Common myeloid progenitor, CD34-positive (primary cell): ENCODE measurements at regions of chr13 and their contacts with region 1.

Region 1: GRCh38 chr13:113730831-113731191 is 28.2 kb upstream of the TMEM255B start:
- DNase-seq: no peak
- H3K4me3 ChIP-seq: no peak overlapping the region
- H3K27ac ChIP-seq: no peak overlapping the region
- H3K4me1 ChIP-seq: peaks cover 0 to 17% (median 7%) of the 10 kb centered on the region in 4 experiments
- H3K27me3 ChIP-seq: peaks cover 0 to 48% (median 8%) of the 10 kb centered on the region in 5 experiments

Region 2: GRCh38 chr13:113564331-113565043 is 166.3 kb before region 1 on chr13:
- CTCF ChIA-PET with region 1: no interaction called
- POLR2A ChIA-PET with region 1: no interaction called
- DNase-seq: no peak
- H3K4me3 ChIP-seq: no peak overlapping the region
- H3K27ac ChIP-seq: no peak overlapping the region
- H3K4me1 ChIP-seq: peaks cover 0 to 2% (median 0%) of the 10 kb centered on the region in 4 experiments
- H3K27me3 ChIP-seq: peaks cover 0 to 12% (median 2%) of the 10 kb centered on the region in 5 experiments

Region 3: GRCh38 chr13:113742000-113742441 is 11.2 kb after region 1 on chr13:
- CTCF ChIA-PET with region 1: interaction called, 21 read pairs
- POLR2A ChIA-PET with region 1: no interaction called
- DNase-seq: peak; percentile 46 to 62 (median 57)
- H3K4me3 ChIP-seq: peak overlapping the region in 3 of 7 experiments; percentile 19 to 45 (median 45)
- H3K27ac ChIP-seq: no peak overlapping the region
- H3K4me1 ChIP-seq: peaks cover 6 to 38% (median 33%) of the 10 kb centered on the region in 4 experiments
- H3K27me3 ChIP-seq: peaks cover 0 to 45% (median 11%) of the 10 kb centered on the region in 5 experiments